Activated CD4-positive, alpha-beta memory T cell treated with anti-CD3 and anti-CD28 coated beads for 36 hours (primary cell): ENCODE measurements at regions of chr6 and their contacts with region 1.

Region 1: GRCh38 chr6:42017021-42017643 is 33.2 kb upstream of the TAF8 start:
- DNase-seq: peak; percentile 70
- H3K4me3 Mint-ChIP-seq: peak overlapping the region; percentile 57
- H3K27ac Mint-ChIP-seq: peak overlapping the region; percentile 92
- H3K4me1 Mint-ChIP-seq: peaks cover 67% of the 10 kb centered on the region
- H3K27me3 Mint-ChIP-seq: no peaks in the 10 kb centered on the region

Region 2: DNA sequence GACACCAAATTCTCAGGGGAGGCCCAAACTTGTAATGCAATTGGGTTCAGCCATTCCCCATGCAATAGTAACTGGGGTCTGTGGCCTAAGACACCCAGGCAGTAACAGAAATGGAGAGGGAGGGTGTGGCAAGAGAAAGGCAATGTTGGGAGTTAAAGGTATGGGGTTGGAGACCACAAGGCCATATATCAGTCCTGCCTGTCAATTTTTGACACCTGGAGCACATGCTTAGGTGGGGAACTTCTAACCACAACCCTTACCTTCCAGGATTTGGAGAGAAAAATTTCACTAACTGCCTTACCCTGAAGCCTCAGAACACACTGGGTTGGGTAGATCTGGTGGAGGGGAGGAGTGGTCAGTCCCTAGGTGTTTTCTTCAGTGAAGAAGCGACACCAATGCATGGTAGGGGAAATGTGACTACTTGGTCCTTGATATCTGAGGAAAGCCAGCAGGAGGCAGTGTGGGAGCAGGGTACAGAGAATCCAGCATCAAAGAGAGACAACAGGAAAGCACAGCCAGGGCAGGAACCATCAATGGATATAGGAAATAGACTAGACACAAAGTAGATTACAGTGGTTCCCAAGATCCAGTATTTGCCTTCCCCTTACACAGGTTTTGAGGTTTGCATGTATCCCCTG is 115.1 kb before region 1 on chr6:
- CTCF ChIA-PET with region 1: no interaction called
- POLR2A ChIA-PET with region 1: no interaction called
- intact Hi-C with region 1: no loop called
- DNase-seq: peak; percentile 75
- H3K4me3 Mint-ChIP-seq: no peak overlapping the region
- H3K27ac Mint-ChIP-seq: no peak overlapping the region
- H3K4me1 Mint-ChIP-seq: peaks cover 12% of the 10 kb centered on the region
- H3K27me3 Mint-ChIP-seq: no peaks in the 10 kb centered on the region

Region 3: GRCh38 chr6:41941280-41942066 is 75.7 kb before region 1 on chr6 and contains the start of gene CCND3:
- CTCF ChIA-PET with region 1: interaction called, 3 read pairs
- POLR2A ChIA-PET with region 1: interaction called, 11 read pairs
- intact Hi-C with region 1: no loop called
- DNase-seq: peak; percentile 94
- H3K4me3 Mint-ChIP-seq: peak within 1 kb of the TSS; percentile 99
- H3K27ac Mint-ChIP-seq: peak within 1 kb of the TSS; percentile 94
- H3K4me1 Mint-ChIP-seq: peaks cover 50% of the 10 kb centered on the region
- H3K27me3 Mint-ChIP-seq: no peaks in the 10 kb centered on the region
- total RNA-seq, gene CCND3: 570 to 573 TPM

Region 4: DNA sequence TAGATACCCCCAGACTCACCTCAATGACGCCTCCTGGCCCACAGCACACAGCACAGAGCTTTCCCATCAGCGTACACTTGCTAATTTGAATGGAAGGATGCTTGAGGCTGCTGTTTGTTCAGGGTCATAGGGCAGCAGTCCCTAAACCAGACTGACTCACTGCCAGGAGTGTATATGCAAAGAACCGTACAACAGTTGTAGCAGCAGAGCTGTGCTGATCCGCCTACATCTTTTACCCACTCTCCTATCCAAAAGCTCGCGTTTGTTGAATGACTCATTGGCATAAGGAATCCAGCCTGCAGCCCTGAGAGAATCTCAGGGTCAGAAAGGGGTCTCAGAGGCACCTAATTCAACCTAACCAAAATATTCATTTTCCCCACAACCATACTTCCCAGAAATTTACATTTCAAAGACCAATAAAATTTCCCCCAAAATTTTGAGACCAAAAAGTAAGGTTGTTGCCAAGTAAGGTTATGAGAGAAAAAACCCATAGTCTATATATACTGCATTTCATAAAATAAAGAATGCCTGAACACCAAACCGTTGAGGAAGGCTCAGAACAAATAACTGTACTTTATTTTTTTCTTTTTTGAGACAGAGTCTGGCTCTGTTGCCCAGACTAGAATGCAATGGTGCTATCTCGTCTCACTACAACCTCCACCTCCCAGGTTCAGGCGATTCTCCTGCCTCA is 40.2 kb before region 1 on chr6:
- CTCF ChIA-PET with region 1: no interaction called
- POLR2A ChIA-PET with region 1: interaction called, 6 read pairs
- intact Hi-C with region 1: loop called (anchors 2 kb)
- DNase-seq: peak; percentile 64
- H3K4me3 Mint-ChIP-seq: peak overlapping the region; percentile 57
- H3K27ac Mint-ChIP-seq: peak overlapping the region; percentile 94
- H3K4me1 Mint-ChIP-seq: peaks cover 67% of the 10 kb centered on the region
- H3K27me3 Mint-ChIP-seq: no peaks in the 10 kb centered on the region

Region 5: GRCh38 chr6:42028234-42029061 is 11.3 kb after region 1 on chr6:
- CTCF ChIA-PET with region 1: interaction called, 5 read pairs
- POLR2A ChIA-PET with region 1: interaction called, 9 read pairs
- intact Hi-C with region 1: loop called (anchors 1 kb)
- DNase-seq: peak; percentile 58
- H3K4me3 Mint-ChIP-seq: peak overlapping the region; percentile 77
- H3K27ac Mint-ChIP-seq: peak overlapping the region; percentile 97
- H3K4me1 Mint-ChIP-seq: peaks cover 82% of the 10 kb centered on the region
- H3K27me3 Mint-ChIP-seq: no peaks in the 10 kb centered on the region

Region 6: DNA sequence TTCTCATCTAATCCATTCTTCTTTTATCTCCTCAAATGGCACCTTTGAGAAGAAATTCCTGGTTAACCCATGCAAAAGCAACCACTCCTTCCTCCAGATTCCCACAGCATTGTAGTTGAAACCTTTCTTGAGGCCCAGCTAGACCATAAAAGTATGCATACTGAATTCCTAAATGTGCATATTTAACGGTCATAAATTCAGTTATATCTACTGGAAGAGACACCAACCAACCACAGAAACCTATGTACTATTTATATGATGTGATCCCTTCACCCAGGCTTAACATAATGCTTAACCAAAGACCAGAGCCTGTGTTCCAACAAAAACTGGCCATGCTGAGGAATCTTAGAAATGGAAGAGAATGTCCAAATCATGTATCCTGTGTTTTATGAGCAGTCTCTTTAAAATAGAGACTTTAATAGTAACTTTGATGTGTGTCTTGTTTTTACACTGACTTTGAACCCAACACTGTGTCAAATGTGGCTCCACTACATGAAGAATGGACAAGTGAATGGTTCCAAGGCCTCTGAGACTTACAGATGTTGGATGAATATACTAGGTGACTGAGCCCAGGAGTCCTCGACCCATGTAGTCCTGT is 21.8 kb after region 1 on chr6:
- CTCF ChIA-PET with region 1: interaction called, 8 read pairs
- POLR2A ChIA-PET with region 1: interaction called, 17 read pairs
- intact Hi-C with region 1: loop called (anchors 1 kb)
- DNase-seq: no peak
- H3K4me3 Mint-ChIP-seq: peak overlapping the region; percentile 78
- H3K27ac Mint-ChIP-seq: peak overlapping the region; percentile 96
- H3K4me1 Mint-ChIP-seq: peaks cover 67% of the 10 kb centered on the region
- H3K27me3 Mint-ChIP-seq: no peaks in the 10 kb centered on the region